ENCODE measurements at regions of chr5 and their contacts with region 1.

Region 1: GRCh38 chr5:140372971-140373487 is 13.0 kb downstream of the SLC4A9 start:
- DNase-seq: peak; percentile 80
- H3K4me3 ChIP-seq: no peak overlapping the region
- H3K27ac ChIP-seq: no peak overlapping the region
- H3K4me1 ChIP-seq: peaks cover 7% of the 10 kb centered on the region
- H3K27me3 ChIP-seq: no peaks in the 10 kb centered on the region
- CTCF ChIP-seq: peak; percentile 48 to 82 (median 71)
- POLR2A ChIP-seq: no peak

Region 2: DNA sequence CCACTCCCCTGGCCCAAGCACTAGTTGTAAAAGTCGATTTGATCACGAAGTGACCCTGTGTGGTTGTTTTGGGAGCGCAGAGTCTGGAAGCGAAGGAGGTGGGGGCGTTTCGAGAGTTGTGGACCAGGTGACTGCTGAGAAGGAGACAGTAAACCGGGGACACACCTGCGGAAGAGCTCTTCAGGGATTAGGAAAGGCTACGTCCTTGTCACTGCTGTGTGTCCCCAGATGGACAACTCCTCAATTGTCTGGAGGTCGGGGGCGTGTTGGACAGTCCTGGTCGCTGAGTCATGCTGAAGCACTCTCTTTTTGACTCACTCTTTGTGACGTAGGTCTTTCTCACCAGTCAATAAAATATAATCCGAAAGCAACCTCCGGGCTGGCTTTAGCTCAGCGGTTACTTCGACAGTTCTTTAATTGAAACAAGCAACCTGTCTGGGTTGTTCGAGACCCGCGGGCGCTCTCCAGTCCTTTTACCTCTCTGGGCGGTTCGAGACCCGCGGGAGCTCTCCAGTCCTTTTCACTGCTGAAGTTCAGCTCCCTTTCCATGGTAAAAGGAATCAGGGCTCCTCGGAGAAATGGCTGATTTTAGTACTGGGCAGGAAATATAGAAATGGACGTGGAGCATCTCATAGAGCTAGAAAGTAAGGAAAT is 338.0 kb after region 1 on chr5:
- intact Hi-C with region 1: loop called (anchors 10 kb)
- DNase-seq: peak; percentile 92
- H3K4me3 ChIP-seq: peak overlapping the region; percentile 54 to 64
- H3K27ac ChIP-seq: peak overlapping the region; percentile 66 to 81
- H3K4me1 ChIP-seq: no peaks in the 10 kb centered on the region
- H3K27me3 ChIP-seq: no peaks in the 10 kb centered on the region
- CTCF ChIP-seq: no peak
- POLR2A ChIP-seq: no peak

Measured in testis (tissue), 5 donors.